ENCODE measurements at regions of chr5 and their contacts with region 1.

Region 1: GRCh38 chr5:14861123-14861765 is 10.3 kb downstream of the ANKH start:
- DNase-seq: no peak
- ATAC-seq: no peak
- H3K4me3 Mint-ChIP-seq: no peak overlapping the region
- H3K27ac Mint-ChIP-seq: no peak overlapping the region
- H3K4me1 Mint-ChIP-seq: no peaks in the 10 kb centered on the region
- H3K27me3 Mint-ChIP-seq: no peaks in the 10 kb centered on the region
- CTCF ChIP-seq: no peak

Region 2: DNA sequence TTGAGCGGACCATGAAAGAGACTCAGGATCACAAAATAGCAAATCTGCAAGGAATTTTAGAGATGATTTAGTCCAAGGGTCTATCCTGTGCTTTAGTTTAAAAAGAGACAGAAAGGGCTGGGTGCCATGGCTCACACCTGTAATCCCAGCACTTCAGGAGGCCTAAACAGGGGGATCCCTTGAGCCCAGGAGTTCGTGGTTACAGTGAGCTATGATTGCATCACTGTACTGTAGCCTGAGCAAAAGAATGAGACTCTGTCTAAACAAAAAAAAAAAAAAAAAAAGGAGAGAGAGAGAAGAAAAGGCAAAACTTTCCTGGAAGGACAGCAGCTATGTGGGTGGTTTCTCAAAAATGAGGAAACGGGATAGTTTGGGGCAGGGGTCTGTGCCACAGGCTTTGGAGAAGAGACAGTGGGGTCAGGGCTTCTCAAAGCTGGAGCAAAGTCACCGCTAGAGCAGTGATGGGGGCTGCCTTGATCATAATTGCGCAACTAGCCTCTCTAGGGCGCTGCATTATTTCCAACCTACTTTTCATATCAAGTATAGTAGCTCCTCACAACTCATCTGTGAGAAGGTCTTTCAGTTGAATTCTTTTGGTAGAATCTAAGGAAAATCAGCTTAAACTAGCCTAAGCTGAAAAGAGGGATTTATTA is 18.8 kb after region 1 on chr5:
- CTCF ChIA-PET with region 1: no interaction called
- POLR2A ChIA-PET with region 1: interaction called, 12 read pairs
- intact Hi-C with region 1: no loop called
- DNase-seq: no peak
- ATAC-seq: no peak
- H3K4me3 Mint-ChIP-seq: no peak overlapping the region
- H3K27ac Mint-ChIP-seq: no peak overlapping the region
- H3K4me1 Mint-ChIP-seq: no peaks in the 10 kb centered on the region
- H3K27me3 Mint-ChIP-seq: peaks cover 19% of the 10 kb centered on the region
- CTCF ChIP-seq: no peak

Region 3: GRCh38 chr5:14914603-14915277 is 53.5 kb after region 1 on chr5:
- CTCF ChIA-PET with region 1: no interaction called
- POLR2A ChIA-PET with region 1: no interaction called
- intact Hi-C with region 1: no loop called
- DNase-seq: no peak
- ATAC-seq: no peak
- H3K4me3 Mint-ChIP-seq: no peak overlapping the region
- H3K27ac Mint-ChIP-seq: no peak overlapping the region
- H3K4me1 Mint-ChIP-seq: no peaks in the 10 kb centered on the region
- H3K27me3 Mint-ChIP-seq: peaks cover 11% of the 10 kb centered on the region
- CTCF ChIP-seq: no peak

Region 4: DNA sequence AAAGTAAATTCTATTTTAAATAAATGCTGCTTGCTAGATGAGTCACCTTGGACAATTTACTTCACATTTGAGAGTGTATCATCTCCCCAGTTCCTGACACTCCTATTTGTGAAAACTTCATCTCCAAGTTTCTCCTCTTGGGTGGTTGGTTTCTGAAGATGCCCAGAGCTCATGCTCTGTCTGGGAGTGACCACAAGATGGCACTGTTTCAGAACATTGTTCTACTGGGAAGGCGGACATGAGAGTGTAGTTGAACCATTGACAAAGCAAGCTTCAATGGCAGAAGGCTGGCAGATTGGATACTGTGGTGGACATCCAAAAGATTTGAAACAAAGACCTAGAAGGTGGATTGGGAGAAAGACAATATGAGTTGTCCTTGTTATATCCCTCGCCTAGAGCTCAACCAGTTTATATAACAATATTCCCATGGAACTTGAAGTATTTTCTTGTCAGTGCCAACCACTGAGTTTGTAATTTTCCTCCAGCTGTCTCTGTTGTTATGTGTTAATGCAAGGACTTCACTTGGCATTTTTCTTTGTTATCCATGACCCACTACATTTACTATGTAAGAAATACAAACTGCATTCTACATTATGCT is 244.7 kb after region 1 on chr5:
- CTCF ChIA-PET with region 1: no interaction called
- POLR2A ChIA-PET with region 1: no interaction called
- intact Hi-C with region 1: no loop called
- DNase-seq: no peak
- ATAC-seq: no peak
- H3K4me3 Mint-ChIP-seq: no peak overlapping the region
- H3K27ac Mint-ChIP-seq: no peak overlapping the region
- H3K4me1 Mint-ChIP-seq: no peaks in the 10 kb centered on the region
- H3K27me3 Mint-ChIP-seq: no peaks in the 10 kb centered on the region
- CTCF ChIP-seq: peak; percentile 37

Measured in activated B cell treated with CpG ODN at 0.5 μM for 24 hours (primary cell).